Naive thymus-derived CD4-positive, alpha-beta T cell (primary cell): ENCODE measurements at regions of chr11 and their contacts with region 1.

Region 1: GRCh38 chr11:11931461-11932055 is 76.9 kb downstream of the DKK3 start:
- DNase-seq: peak in 7 of 9 donors; percentile 7 to 45 (median 31)
- ATAC-seq: peak; percentile 75
- H3K4me3 ChIP-seq: no peak overlapping the region
- H3K4me3 Mint-ChIP-seq: no peak overlapping the region
- H3K27ac ChIP-seq: no peak overlapping the region
- H3K27ac Mint-ChIP-seq: no peak overlapping the region
- H3K4me1 ChIP-seq: no peaks in the 10 kb centered on the region
- H3K4me1 Mint-ChIP-seq: peaks cover 4 to 11% (median 8%) of the 10 kb centered on the region in 7 donors
- H3K27me3 ChIP-seq: no peaks in the 10 kb centered on the region
- H3K27me3 Mint-ChIP-seq: no peaks in the 10 kb centered on the region

Region 2: GRCh38 chr11:12043959-12044819 is 112.6 kb after region 1 on chr11:
- CTCF ChIA-PET with region 1: interaction called, 3 read pairs
- POLR2A ChIA-PET with region 1: interaction called, 3 read pairs
- intact Hi-C with region 1: loop called (anchors 1 kb)
- DNase-seq: peak; percentile 17 to 64 (median 44)
- ATAC-seq: peak; percentile 74
- H3K4me3 ChIP-seq: no peak overlapping the region
- H3K4me3 Mint-ChIP-seq: no peak overlapping the region
- H3K27ac ChIP-seq: no peak overlapping the region
- H3K27ac Mint-ChIP-seq: peak overlapping the region in 1 of 9 donors; percentile 58
- H3K4me1 ChIP-seq: peaks cover 0 to 3% of the 10 kb centered on the region in 2 donors
- H3K4me1 Mint-ChIP-seq: peaks cover 0 to 9% (median 0%) of the 10 kb centered on the region in 7 donors
- H3K27me3 ChIP-seq: no peaks in the 10 kb centered on the region
- H3K27me3 Mint-ChIP-seq: peaks cover 0 to 7% (median 0%) of the 10 kb centered on the region in 5 donors

Region 3: DNA sequence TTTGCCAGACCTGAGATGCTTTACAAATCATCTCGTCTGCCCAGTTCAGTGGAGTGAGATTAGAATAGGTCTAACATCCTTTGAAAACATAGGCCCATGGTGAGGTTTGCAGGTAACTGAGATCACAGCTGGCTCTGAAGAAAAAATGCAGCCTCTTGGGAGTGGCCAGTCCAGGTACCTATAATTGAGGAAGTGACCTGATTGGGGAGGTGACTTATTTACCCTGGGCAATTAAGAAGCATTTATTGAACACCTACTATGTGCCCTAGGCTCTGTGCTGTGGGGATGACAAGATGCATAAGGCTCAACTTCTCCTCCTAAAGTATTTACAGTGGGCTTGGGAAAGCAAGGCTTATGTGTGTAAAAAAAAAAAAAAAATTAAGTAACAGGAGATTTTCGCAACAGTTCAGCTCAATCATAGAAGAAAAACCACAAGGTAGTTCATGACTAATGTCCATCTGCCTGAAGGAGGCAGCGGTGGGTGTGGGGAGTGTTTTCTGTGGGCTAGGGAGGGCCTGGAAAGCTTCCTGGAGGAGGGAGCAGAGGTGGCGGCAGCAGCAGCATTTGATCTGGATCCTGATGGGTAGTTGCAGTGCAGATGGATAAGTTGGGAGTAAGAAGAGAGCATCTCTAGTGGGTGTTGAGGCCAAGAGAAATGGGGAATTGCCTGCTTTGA is 194.9 kb after region 1 on chr11:
- CTCF ChIA-PET with region 1: no interaction called
- POLR2A ChIA-PET with region 1: no interaction called
- intact Hi-C with region 1: no loop called
- DNase-seq: no peak
- ATAC-seq: peak; percentile 31
- H3K4me3 ChIP-seq: no peak overlapping the region
- H3K4me3 Mint-ChIP-seq: no peak overlapping the region
- H3K27ac ChIP-seq: no peak overlapping the region
- H3K27ac Mint-ChIP-seq: no peak overlapping the region
- H3K4me1 ChIP-seq: no peaks in the 10 kb centered on the region
- H3K4me1 Mint-ChIP-seq: peaks cover 10 to 75% (median 15%) of the 10 kb centered on the region in 7 donors
- H3K27me3 ChIP-seq: no peaks in the 10 kb centered on the region
- H3K27me3 Mint-ChIP-seq: no peaks in the 10 kb centered on the region